AG04449 (cell line): ENCODE measurements at regions of chr15 and their contacts with region 1.

Region 1: DNA sequence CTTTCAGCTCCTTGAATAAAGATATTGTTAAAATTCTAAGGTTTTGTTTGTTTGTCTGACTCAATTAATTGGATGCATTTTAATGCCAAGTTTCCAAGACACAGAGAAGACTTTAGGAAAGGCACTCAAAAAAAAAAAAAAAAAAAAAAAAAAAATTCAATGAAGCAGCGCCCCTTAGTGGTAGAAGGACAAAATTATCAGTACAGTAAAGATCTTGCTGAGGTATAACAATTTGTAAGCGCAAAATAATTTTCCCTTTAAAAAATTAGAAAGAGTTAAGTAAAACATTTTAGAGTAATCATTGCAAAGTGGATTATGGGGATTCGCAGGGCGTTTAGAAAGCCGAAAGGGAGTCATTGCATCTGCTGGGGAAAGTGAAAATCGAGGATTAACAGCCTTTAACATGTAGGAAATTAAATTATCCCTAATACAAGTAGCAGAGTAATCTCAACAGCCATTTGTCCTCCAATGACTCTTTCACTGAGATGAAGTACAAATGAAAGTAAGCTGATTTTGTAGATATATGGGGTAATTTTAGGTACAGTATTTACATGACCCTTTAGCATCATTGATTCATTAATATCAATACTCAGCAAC is 5.8 kb upstream of the DIS3L start:
- DNase-seq: no peak
- H3K4me3 ChIP-seq: no peak overlapping the region
- CTCF ChIP-seq: peak; percentile 22

Region 2: GRCh38 chr15:65916664-65917406 is 370.7 kb before region 1 on chr15:
- CTCF ChIA-PET with region 1: interaction called, 21 read pairs
- POLR2A ChIA-PET with region 1: no interaction called
- DNase-seq: peak; percentile 41
- H3K4me3 ChIP-seq: no peak overlapping the region
- CTCF ChIP-seq: peak; percentile 85

Region 3: GRCh38 chr15:65980824-65981456 is 306.6 kb before region 1 on chr15:
- CTCF ChIA-PET with region 1: interaction called, 18 read pairs
- POLR2A ChIA-PET with region 1: no interaction called
- DNase-seq: peak; percentile 56
- H3K4me3 ChIP-seq: no peak overlapping the region
- CTCF ChIP-seq: peak; percentile 87

Region 4: GRCh38 chr15:66251790-66252684 is 35.5 kb before region 1 on chr15:
- CTCF ChIA-PET with region 1: interaction called, 12 read pairs
- POLR2A ChIA-PET with region 1: no interaction called
- DNase-seq: no peak
- H3K4me3 ChIP-seq: peak overlapping the region; percentile 52
- CTCF ChIP-seq: peak; percentile 82